A673 (cell line): ENCODE measurements at regions of chr9 and their contacts with region 1.

Region 1: GRCh38 chr9:113602126-113603044 is 138.9 kb downstream of the RGS3 start:
- DNase-seq: peak; percentile 88
- H3K4me3 ChIP-seq: no peak overlapping the region
- H3K27ac ChIP-seq: peak overlapping the region; percentile 48
- H3K4me1 ChIP-seq: peaks cover 33% of the 10 kb centered on the region
- H3K27me3 ChIP-seq: no peaks in the 10 kb centered on the region
- CTCF ChIP-seq: no peak

Region 2: DNA sequence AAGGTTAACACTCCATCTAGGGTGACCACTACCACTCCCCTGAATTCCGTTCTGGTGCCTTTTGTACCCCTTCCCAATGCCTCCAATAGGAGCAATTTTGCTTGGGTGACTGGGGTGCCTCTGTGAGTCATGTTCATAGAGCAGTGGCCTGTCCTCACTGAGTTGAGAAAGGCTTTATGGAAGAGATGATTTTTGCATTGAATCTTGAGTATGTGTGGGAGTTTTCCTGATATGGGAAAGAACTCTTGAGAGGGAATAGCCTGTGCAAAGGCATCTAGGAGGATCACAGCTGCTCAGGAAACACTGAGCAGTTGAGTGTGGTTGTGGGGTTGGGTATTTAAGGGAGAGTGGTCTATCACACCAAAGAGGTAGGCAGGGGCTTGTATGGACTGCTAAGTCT is 175.7 kb before region 1 on chr9:
- CTCF ChIA-PET with region 1: no interaction called
- POLR2A ChIA-PET with region 1: interaction called, 10 read pairs
- intact Hi-C with region 1: no loop called
- DNase-seq: no peak
- H3K4me3 ChIP-seq: no peak overlapping the region
- H3K27ac ChIP-seq: no peak overlapping the region
- H3K4me1 ChIP-seq: no peaks in the 10 kb centered on the region
- H3K27me3 ChIP-seq: peaks cover 3% of the 10 kb centered on the region
- CTCF ChIP-seq: no peak

Region 3: DNA sequence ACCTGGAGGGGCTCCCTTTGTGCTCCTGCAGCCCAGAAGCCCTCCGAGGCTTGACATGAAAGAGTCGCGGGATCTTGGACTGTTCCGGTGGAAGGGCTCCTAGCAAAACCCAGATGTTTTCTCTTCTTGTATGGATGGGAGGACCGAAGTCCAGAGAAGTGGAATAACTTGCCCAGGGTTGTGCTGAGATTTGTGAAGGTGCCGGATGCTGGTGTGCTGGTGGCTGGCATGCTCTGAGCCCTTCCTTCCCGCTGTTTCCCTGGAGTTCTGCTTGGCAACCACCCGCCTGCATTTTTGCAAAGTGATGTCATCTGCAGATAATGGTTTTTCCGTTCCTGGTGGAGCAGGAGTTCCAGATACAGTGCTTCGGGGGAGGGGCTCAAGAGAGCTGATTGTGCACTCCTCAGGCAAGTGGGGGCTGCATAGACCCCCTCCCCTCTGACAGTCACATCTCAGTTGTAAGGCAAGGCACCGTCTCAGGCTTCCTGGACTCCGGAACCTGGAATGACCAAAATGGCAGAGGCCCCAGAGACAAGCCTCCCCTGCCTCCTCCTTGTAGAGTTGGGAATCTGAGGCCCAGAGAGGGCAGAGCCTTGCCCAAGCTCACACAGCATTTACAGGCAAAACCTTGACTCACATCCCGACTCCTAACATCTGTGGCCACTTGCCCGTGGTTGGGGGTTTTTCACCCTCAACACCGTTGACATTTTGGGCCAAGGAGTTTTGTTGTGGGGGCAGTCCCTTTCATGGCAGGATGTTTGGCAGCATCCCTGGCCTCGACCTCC is 18.2 kb after region 1 on chr9:
- CTCF ChIA-PET with region 1: no interaction called
- POLR2A ChIA-PET with region 1: interaction called, 3 read pairs
- intact Hi-C with region 1: loop called (anchors 2 kb)
- DNase-seq: peak; percentile 91
- H3K4me3 ChIP-seq: no peak overlapping the region
- H3K27ac ChIP-seq: peak overlapping the region; percentile 67
- H3K4me1 ChIP-seq: peaks cover 68% of the 10 kb centered on the region
- H3K27me3 ChIP-seq: no peaks in the 10 kb centered on the region
- CTCF ChIP-seq: no peak

Region 4: DNA sequence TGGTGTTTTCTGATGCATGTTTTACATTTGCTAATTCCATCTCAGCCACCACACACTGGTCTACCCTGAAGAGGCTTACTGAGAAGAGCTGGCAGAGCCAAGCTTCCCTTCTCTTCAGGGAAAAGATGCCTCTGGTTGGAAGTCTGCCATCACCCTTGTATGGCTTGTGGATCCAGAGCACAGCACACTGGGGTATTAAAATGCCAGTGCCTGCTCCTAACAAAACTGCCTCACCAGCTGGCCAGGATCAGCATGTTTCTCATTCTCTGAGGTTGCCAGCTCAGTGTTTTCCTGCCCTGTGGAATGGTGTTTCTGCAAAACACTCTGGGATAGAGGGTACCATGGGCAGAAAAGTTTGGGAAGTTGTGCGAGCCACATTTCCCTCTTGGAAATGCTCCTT is 242.1 kb after region 1 on chr9:
- CTCF ChIA-PET with region 1: no interaction called
- POLR2A ChIA-PET with region 1: no interaction called
- intact Hi-C with region 1: no loop called
- DNase-seq: peak; percentile 9
- H3K4me3 ChIP-seq: no peak overlapping the region
- H3K27ac ChIP-seq: no peak overlapping the region
- H3K4me1 ChIP-seq: no peaks in the 10 kb centered on the region
- H3K27me3 ChIP-seq: no peaks in the 10 kb centered on the region
- CTCF ChIP-seq: no peak